GM10248 (cell line): ENCODE measurements at regions of chr22 and their contacts with region 1.

Region 1: GRCh38 chr22:41800348-41801146 is at the start of gene CCDC134:
- DNase-seq: peak; percentile 97
- CTCF ChIP-seq: no peak

Region 2: GRCh38 chr22:41786418-41786817 is 14.1 kb before region 1 on chr22:
- CTCF ChIA-PET with region 1: interaction called, 43 read pairs
- POLR2A ChIA-PET with region 1: interaction called, 10 read pairs
- DNase-seq: no peak
- CTCF ChIP-seq: no peak

Region 3: GRCh38 chr22:41902932-41903421 is 102.4 kb after region 1 on chr22:
- CTCF ChIA-PET with region 1: no interaction called
- POLR2A ChIA-PET with region 1: no interaction called
- DNase-seq: no peak
- CTCF ChIP-seq: no peak